ENCODE measurements at regions of chr22 and their contacts with region 1.

Region 1: GRCh38 chr22:37594237-37594636 is 14.3 kb upstream of the LGALS2 start:
- DNase-seq: no peak
- H3K4me3 ChIP-seq: no peak overlapping the region
- H3K27ac ChIP-seq: no peak overlapping the region
- H3K4me1 ChIP-seq: peaks cover 0 to 11% (median 4%) of the 10 kb centered on the region in 4 experiments
- H3K27me3 ChIP-seq: no peaks in the 10 kb centered on the region

Region 2: GRCh38 chr22:37581504-37581903 is 12.7 kb before region 1 on chr22:
- CTCF ChIA-PET with region 1: interaction called, 22 read pairs
- POLR2A ChIA-PET with region 1: interaction called, 4 read pairs
- DNase-seq: peak in 1 of 3 donors; percentile 36
- H3K4me3 ChIP-seq: no peak overlapping the region
- H3K27ac ChIP-seq: no peak overlapping the region
- H3K4me1 ChIP-seq: peaks cover 5 to 28% (median 24%) of the 10 kb centered on the region in 4 experiments
- H3K27me3 ChIP-seq: peaks cover 0 to 5% (median 0%) of the 10 kb centered on the region in 5 experiments

Region 3: DNA sequence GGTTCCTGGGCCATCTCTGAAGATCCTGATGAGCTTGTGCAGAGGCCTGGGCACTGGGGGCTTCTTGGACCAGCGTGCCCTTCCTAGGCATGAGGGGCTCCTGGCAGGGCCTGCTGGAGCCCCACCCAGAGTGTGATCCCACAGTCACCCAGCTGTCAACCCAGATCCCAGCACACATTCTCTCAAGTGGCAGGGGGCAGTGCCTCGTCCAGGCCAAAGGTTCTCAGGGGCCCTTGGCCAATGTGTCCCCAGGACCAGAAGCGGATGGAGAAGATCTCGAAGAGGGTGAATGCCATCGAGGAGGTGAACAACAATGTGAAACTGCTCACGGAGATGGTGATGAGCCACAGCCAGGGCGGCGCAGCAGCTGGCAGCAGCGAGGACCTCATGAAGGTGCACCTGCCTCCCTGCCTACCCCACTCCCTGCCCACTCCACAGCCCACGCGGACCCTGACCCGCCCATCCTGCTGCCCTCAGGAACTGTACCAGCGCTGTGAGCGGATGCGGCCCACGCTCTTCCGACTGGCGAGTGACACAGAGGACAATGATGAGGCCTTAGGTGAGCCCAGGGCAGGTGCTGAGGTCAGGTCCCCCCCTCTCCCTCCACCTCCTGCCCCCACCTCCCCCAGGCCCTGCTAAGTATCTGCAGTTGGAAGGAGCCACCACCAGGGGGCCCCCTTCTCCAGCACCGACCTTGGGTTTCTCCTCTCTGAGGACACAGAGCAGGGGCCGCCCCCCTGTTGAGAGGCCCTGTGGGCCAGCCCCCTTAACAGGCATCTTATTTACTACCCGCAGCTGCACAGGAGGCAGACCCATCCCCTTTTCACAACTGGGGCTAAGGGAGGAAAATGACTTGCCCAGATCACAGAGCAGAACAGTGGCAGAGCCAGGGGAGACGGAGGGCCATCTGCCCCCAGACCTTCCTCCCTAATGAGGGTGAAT is 29.1 kb after region 1 on chr22:
- CTCF ChIA-PET with region 1: no interaction called
- POLR2A ChIA-PET with region 1: no interaction called
- DNase-seq: peak in 2 of 3 donors; percentile 78 to 82
- H3K4me3 ChIP-seq: no peak overlapping the region
- H3K27ac ChIP-seq: peak overlapping the region; percentile 20 to 32
- H3K4me1 ChIP-seq: peaks cover 4 to 42% (median 32%) of the 10 kb centered on the region in 4 experiments
- H3K27me3 ChIP-seq: no peaks in the 10 kb centered on the region

Measured in common myeloid progenitor, CD34-positive (primary cell).